Ascending aorta (tissue), 2 donors: ENCODE measurements at regions of chr17 and their contacts with region 1.

Region 1: DNA sequence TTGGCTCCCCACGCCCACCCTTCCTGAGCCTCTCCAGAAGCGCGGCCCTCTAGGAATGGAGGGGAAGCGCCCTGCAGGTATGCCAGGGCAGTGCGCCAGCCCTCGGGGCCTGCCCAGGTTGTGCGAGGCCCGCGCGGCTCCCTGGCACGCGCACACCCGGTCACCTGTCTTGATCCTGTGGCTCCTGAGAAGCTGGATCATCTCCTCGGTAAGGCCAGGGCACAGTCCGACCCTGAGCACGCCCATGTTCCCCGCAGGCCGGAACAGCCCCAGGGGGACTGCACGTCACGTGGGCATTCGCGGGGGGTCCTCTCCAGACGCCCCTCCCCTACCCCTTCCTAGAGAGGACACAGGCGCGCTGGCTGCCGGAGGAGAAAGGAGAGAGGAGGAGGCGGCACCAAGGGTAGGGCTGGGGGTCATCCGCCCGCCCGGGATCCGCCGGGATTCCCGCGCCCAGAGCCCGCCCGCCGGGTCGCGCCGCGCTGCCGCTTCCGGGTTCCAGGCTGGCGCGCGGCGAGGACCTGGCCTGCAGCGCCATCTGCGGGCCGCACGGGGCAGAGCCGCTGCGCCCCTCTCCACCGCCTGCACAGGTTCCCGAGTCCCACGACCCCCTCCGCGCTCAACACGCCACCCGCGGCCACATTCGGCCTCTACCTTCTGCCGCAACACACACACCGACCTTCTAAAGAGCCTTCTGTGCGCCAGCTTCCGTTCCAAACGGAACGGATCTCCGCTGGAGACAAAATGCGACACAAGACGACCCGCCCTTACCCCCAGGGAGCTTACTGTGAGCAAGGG is at the start of gene RAD51D:
- DNase-seq: peak in 1 of 2 donors; percentile 85
- H3K4me3 ChIP-seq: peak within 1 kb of the TSS; percentile 84 to 91
- H3K27ac ChIP-seq: peak within 1 kb of the TSS; percentile 75 to 81
- H3K4me1 ChIP-seq: peaks cover 4 to 17% of the 10 kb centered on the region in 2 donors
- H3K27me3 ChIP-seq: no peaks in the 10 kb centered on the region
- CTCF ChIP-seq: peak; percentile 77 to 97 (median 82)
- total RNA-seq, gene RAD51D: 3.7 TPM

Region 2: GRCh38 chr17:34420254-34420766 is 699.3 kb before region 1 on chr17:
- intact Hi-C with region 1: loop called (anchors 1 kb)
- DNase-seq: peak in 1 of 2 donors; percentile 81
- H3K4me3 ChIP-seq: no peak overlapping the region
- H3K27ac ChIP-seq: no peak overlapping the region
- H3K4me1 ChIP-seq: no peaks in the 10 kb centered on the region
- H3K27me3 ChIP-seq: no peaks in the 10 kb centered on the region
- CTCF ChIP-seq: peak; percentile 59 to 96 (median 89)

Region 3: GRCh38 chr17:34542700-34543336 is 576.7 kb before region 1 on chr17:
- intact Hi-C with region 1: loop called (anchors 2 kb)
- DNase-seq: no peak
- H3K4me3 ChIP-seq: no peak overlapping the region
- H3K27ac ChIP-seq: no peak overlapping the region
- H3K4me1 ChIP-seq: no peaks in the 10 kb centered on the region
- H3K27me3 ChIP-seq: no peaks in the 10 kb centered on the region
- CTCF ChIP-seq: peak; percentile 47 to 62 (median 48)

Region 4: DNA sequence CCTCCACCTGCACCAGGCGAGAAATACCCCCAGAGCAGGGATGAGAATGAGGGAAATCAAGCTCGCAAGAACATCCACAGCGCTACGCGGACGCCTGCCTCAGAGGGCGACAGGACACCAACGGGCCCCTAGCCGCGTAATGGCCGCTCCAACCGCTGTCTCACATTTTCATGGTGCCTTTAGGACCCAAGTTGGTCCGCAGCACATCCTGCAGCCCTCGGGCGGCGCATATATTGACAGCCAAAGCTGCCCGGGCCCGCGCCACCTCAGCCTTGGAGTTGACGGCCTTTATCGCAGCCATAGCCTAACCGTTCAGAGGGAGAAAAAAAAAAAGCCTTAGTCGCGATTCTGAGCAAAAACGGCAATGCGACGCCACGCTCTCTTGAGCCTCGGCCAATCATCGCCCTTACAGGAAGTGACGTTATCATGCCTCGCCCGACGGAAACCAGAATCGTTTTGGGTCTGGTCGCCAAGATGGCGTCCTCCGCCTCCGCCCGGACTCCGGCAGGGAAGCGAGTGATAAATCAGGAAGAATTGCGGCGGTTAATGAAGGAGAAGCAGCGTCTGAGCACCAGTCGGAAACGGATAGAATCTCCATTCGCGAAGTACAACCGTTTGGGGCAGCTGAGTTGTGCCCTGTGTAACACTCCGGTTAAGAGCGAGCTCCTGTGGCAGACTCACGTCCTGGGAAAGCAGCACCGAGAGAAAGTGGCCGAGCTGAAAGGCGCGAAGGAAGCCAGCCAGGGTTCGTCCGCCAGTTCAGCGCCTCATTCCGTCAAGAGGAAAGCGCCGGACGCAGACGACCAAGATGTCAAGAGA is 158.3 kb before region 1 on chr17 and contains the starts of genes CCT6B and ZNF830:
- intact Hi-C with region 1: loop called (anchors 1 kb)
- DNase-seq: peak; percentile 65 to 96
- H3K4me3 ChIP-seq: peak within 1 kb of the TSS; percentile 84
- H3K27ac ChIP-seq: peak within 1 kb of the TSS; percentile 87 to 93
- H3K4me1 ChIP-seq: peaks cover 5 to 10% of the 10 kb centered on the region in 2 donors
- H3K27me3 ChIP-seq: no peaks in the 10 kb centered on the region
- CTCF ChIP-seq: peak in 1 of 3 experiments; percentile 1
- total RNA-seq, gene CCT6B: not detected
- total RNA-seq, gene ZNF830: 1.9 TPM